PC-9 (cell line): ENCODE measurements at regions of chr9 and their contacts with region 1.

Region 1: GRCh38 chr9:121598965-121599871 is 52.2 kb upstream of the DAB2IP start:
- DNase-seq: peak; percentile 69 to 95
- H3K4me3 ChIP-seq: peak overlapping the region; percentile 92
- H3K27ac ChIP-seq: peak overlapping the region; percentile 56
- H3K4me1 ChIP-seq: peaks cover 26% of the 10 kb centered on the region
- H3K27me3 ChIP-seq: no peaks in the 10 kb centered on the region
- CTCF ChIP-seq: no peak

Region 2: GRCh38 chr9:120369608-120370220 is 1229.5 kb before region 1 on chr9:
- CTCF ChIA-PET with region 1: no interaction called
- POLR2A ChIA-PET with region 1: no interaction called
- intact Hi-C with region 1: no loop called
- DNase-seq: no peak
- H3K4me3 ChIP-seq: no peak overlapping the region
- H3K27ac ChIP-seq: no peak overlapping the region
- H3K4me1 ChIP-seq: 0 out of 2 replicates have a peak, but pooled peaks cover 6% of the 10 kb centered on the region
- H3K27me3 ChIP-seq: no peaks in the 10 kb centered on the region
- CTCF ChIP-seq: no peak

Region 3: GRCh38 chr9:121557581-121558447 is 41.4 kb before region 1 on chr9:
- CTCF ChIA-PET with region 1: interaction called, 3 read pairs
- POLR2A ChIA-PET with region 1: no interaction called
- intact Hi-C with region 1: loop called (anchors 2 kb)
- DNase-seq: peak; percentile 87
- H3K4me3 ChIP-seq: peak overlapping the region; percentile 30; the same call in 1 of the 2 replicates
- H3K27ac ChIP-seq: peak overlapping the region; percentile 50
- H3K4me1 ChIP-seq: peaks cover 44% of the 10 kb centered on the region
- H3K27me3 ChIP-seq: no peaks in the 10 kb centered on the region
- CTCF ChIP-seq: no peak

Region 4: GRCh38 chr9:121581786-121582600 is 17.2 kb before region 1 on chr9:
- CTCF ChIA-PET with region 1: no interaction called
- POLR2A ChIA-PET with region 1: interaction called, 19 read pairs
- intact Hi-C with region 1: no loop called
- DNase-seq: no peak
- H3K4me3 ChIP-seq: no peak overlapping the region
- H3K27ac ChIP-seq: no peak overlapping the region
- H3K4me1 ChIP-seq: no peaks in the 10 kb centered on the region
- H3K27me3 ChIP-seq: no peaks in the 10 kb centered on the region; the same call in 1 of the 2 replicates
- CTCF ChIP-seq: no peak

Region 5: GRCh38 chr9:121650217-121651007 is 51.2 kb after region 1 on chr9:
- CTCF ChIA-PET with region 1: no interaction called
- POLR2A ChIA-PET with region 1: no interaction called
- intact Hi-C with region 1: loop called (anchors 1 kb)
- DNase-seq: peak; percentile 51 to 85
- H3K4me3 ChIP-seq: no peak overlapping the region
- H3K27ac ChIP-seq: no peak overlapping the region
- H3K4me1 ChIP-seq: peaks cover 16% of the 10 kb centered on the region
- H3K27me3 ChIP-seq: peaks cover 15% of the 10 kb centered on the region; the same call in 1 of the 2 replicates
- CTCF ChIP-seq: no peak

Region 6: DNA sequence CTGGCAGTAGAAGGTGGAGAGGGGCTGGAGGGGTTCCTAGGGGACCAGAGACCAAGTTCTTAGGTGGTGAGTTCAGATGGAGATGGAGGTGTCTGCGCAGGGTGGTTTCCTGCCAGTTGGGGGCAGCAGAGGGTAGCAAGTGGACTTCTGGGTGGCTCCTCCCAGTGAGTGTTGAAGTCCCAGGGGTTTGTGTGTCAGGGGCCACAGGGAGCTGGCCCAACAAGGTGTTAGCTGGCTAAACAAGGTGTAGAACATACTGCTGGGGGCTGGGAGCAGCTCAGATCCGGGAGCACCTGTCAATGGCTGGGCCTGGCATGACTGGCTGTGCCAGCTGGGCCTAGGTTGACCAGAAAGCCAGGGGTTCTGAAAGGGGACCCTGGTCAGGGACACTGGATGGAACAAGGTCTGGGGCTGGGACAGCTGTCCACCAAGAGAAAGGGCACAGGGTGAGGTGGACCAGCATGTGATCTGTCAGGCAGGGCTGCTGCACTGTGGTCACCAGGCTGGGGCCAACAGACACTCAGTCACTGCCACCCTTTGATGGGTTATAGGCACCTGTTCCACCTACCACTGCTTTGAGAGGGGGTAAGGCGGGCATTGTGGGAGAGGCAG is 87.8 kb after region 1 on chr9:
- CTCF ChIA-PET with region 1: interaction called, 3 read pairs
- POLR2A ChIA-PET with region 1: no interaction called
- intact Hi-C with region 1: loop called (anchors 2 kb)
- DNase-seq: peak; percentile 78 to 87
- H3K4me3 ChIP-seq: no peak overlapping the region
- H3K27ac ChIP-seq: no peak overlapping the region
- H3K4me1 ChIP-seq: peaks cover 9% of the 10 kb centered on the region
- H3K27me3 ChIP-seq: no peaks in the 10 kb centered on the region
- CTCF ChIP-seq: peak; percentile 93

Region 7: DNA sequence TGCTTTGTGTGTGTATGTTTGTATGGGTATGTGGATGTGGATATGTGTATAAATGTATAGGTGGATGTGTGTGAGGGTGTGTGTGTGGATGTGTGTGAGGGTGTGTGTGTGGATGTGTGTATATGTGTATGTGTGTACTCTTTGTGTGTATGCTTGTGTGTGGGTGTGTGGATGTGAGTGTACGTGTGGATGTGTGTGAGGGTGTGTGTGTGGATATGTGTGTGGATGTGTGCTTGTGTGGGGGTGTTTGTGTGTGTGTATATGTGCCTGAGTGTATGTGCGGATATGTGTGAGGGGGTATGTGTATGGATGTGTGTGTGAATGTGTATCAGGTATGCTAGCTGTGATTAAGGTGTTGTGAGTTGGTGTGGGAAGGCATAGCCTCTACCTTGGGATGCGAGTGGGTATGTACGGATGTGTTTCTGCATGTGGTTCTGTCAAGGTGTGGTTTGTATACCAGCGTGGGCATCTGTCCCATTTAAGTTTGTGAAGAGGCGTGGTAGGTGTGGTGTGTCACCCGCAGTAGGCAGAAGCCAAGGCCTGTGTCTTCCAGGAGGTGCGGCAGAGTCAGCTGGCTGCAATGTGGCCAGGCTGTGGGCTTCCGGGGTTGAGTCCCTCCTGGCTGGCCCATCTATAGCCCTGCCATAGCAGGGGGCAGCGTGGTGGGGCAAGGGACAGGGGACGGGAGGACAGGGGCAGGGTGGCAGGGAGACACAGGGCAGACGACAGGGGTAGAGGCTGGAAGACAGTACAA is 208.0 kb after region 1 on chr9:
- CTCF ChIA-PET with region 1: no interaction called
- POLR2A ChIA-PET with region 1: no interaction called
- intact Hi-C with region 1: no loop called
- DNase-seq: no peak
- H3K4me3 ChIP-seq: no peak overlapping the region
- H3K27ac ChIP-seq: no peak overlapping the region
- H3K4me1 ChIP-seq: no peaks in the 10 kb centered on the region
- H3K27me3 ChIP-seq: 0 out of 2 replicates have a peak, but pooled peaks cover 8% of the 10 kb centered on the region
- CTCF ChIP-seq: no peak